MCF 10A (cell line): ENCODE measurements at regions of chr11 and their contacts with region 1.

Region 1: DNA sequence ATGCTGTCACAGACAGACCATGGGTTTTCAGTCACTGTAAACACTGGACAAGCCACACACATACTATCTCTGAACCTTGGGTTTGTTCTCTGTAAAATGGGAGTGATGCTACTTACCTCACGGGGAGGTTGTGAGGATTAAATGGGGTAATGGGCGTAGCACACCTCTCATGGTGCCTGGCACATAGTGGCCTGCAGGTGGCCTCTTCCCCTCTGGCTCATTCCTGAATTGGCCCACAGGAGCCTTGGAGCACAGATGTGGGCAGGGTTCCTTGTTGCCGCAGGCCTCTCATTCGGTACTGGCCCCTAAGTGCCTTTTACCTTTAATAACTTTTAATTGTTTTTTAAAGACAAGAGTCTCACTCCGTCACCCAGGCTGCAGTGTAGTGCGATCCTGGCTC is 11.7 kb downstream of the MICAL2 start:
- DNase-seq: peak; percentile 52
- H3K4me3 Mint-ChIP-seq: no peak overlapping the region
- H3K27ac Mint-ChIP-seq: no peak overlapping the region
- H3K4me1 Mint-ChIP-seq: peaks cover 54% of the 10 kb centered on the region
- H3K27me3 Mint-ChIP-seq: no peaks in the 10 kb centered on the region
- CTCF ChIP-seq: peak; percentile 34

Region 2: DNA sequence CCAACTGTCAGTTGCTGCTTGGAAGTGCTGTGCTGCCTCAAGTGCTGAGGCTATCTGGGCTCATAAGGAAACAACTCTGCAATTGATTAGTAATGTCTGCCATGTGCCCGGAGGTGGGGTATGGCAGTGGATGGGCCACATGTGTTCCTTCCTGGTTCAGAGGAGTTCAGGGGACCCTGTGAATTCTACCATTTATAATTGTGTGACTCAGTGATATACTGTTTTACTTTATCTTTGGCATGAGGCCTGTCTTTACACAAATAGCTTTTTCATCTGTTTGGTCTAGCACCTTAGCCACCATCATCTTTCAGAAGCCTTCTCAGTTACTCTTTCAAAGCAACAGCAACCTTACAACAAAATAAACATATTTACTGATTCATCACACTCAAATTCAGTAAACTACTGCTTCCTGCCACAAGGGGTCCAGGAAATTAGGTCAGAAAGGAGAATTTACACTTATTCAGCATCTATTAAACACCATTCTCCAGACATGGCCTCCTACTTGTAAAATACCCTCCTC is 134.5 kb before region 1 on chr11:
- CTCF ChIA-PET with region 1: no interaction called
- POLR2A ChIA-PET with region 1: no interaction called
- intact Hi-C with region 1: no loop called
- DNase-seq: peak; percentile 30
- H3K4me3 Mint-ChIP-seq: no peak overlapping the region
- H3K27ac Mint-ChIP-seq: peak overlapping the region; percentile 73
- H3K4me1 Mint-ChIP-seq: peaks cover 31% of the 10 kb centered on the region
- H3K27me3 Mint-ChIP-seq: no peaks in the 10 kb centered on the region
- CTCF ChIP-seq: peak; percentile 41

Region 3: GRCh38 chr11:12087075-12088004 is 34.7 kb before region 1 on chr11:
- CTCF ChIA-PET with region 1: interaction called, 22 read pairs
- POLR2A ChIA-PET with region 1: interaction called, 31 read pairs
- intact Hi-C with region 1: no loop called
- DNase-seq: peak; percentile 70
- H3K4me3 Mint-ChIP-seq: peak overlapping the region; percentile 8
- H3K27ac Mint-ChIP-seq: peak overlapping the region; percentile 37
- H3K4me1 Mint-ChIP-seq: peaks cover 45% of the 10 kb centered on the region
- H3K27me3 Mint-ChIP-seq: no peaks in the 10 kb centered on the region
- CTCF ChIP-seq: peak; percentile 11

Region 4: DNA sequence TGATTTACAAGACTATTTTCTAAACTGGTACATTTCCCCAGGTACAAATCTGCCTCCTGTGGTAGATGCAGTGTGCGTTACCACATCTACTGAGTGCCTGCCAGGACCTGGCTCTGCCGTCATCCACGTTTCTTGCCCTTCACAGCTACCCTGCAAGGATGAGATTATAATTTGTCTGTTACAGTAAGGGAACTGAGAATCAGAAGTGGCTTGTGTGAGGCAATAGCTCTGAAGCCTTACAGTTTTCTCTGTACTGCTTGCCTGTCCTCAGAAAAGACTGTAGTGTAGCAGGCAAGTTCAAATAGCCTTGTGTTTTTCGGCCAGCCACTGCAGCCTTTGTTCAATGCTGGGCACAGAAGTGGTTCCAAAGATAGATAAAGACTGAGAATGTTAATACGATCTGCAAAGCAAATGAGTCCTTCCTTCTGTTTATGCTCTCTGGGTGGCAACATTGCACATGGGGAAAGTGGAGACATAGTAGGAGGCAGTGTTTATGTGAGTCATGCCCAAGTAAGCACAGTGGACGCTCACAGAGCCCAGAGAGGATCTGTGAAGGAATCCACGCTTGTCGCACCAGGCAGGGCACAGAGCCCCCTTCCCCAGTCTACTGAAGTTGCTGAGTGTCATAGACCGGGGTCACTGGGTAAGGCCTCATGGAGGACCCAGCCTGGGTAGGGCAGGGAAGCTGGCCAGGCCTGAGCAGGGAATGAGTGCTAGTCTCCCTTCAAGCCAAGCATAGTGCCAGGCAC is 37.4 kb after region 1 on chr11:
- CTCF ChIA-PET with region 1: no interaction called
- POLR2A ChIA-PET with region 1: interaction called, 11 read pairs
- intact Hi-C with region 1: no loop called
- DNase-seq: peak; percentile 81
- H3K4me3 Mint-ChIP-seq: no peak overlapping the region
- H3K27ac Mint-ChIP-seq: peak overlapping the region; percentile 85
- H3K4me1 Mint-ChIP-seq: peaks cover 30% of the 10 kb centered on the region
- H3K27me3 Mint-ChIP-seq: no peaks in the 10 kb centered on the region
- CTCF ChIP-seq: no peak

Region 5: DNA sequence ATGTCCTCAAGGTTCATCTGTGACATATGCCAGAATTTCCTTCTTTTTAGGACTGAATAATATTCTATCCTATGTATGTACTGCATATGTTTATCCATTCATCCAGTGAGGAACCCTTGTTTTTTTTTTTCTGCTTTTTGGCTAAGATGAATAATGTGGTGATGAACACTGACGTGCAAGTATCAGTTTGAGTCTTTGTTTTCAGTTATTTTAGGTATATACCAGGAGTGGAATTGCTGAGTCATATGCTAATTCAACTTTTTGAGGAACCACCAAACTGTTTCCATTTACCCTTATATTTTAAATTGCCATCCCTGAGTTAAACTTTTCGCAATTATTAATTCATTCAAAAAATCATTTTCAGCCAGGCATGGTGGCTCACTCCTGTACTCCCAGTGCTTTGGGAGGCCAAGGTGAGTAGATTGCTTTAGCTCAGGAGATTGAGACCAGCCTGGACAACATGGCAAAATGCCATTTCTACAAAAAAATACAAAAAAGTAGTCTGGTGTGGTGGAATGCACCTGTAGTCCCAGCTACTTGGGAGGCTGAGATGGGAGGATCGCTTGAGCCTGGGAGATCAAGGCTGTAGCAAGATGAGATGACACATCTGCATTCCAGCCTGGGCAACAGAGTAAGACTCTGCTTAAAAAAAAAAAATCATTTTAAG is 52.5 kb after region 1 on chr11:
- CTCF ChIA-PET with region 1: interaction called, 4 read pairs
- POLR2A ChIA-PET with region 1: interaction called, 17 read pairs
- intact Hi-C with region 1: loop called (anchors 5 kb)
- DNase-seq: peak; percentile 53
- H3K4me3 Mint-ChIP-seq: no peak overlapping the region
- H3K27ac Mint-ChIP-seq: peak overlapping the region; percentile 76
- H3K4me1 Mint-ChIP-seq: peaks cover 41% of the 10 kb centered on the region
- H3K27me3 Mint-ChIP-seq: no peaks in the 10 kb centered on the region
- CTCF ChIP-seq: no peak

Region 6: DNA sequence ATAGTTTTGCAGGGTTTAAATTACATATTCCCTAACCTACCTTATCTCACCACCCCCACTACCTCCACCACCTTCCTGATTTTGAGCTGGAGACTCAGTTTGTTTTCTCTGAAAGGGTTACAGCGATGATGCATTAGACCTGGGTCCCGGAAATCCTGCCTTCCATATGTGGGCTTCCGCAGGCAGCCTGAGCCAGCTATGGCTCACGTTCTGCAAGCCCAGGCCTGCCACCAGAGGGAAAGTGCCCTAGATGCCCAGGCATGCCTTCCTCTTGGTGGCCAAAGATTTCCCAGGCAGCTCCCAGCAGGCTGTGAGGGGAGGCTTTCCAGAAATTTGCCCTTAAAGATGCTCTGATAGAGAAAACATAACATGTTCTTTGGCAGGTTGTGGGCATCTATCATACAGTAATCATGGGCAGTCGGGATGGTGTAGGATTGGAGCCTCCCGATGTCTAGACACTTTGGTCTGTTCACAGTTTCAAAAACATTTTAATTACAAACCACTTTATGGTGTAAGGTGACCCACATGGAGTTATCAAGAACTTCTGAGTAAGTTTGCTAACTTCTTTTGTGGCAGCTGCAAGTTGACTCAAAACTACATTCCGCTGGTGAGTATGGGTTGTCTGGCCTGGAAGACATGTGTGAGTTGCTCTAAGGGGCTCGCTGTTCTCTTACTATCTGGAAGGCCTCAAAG is 67.6 kb after region 1 on chr11:
- CTCF ChIA-PET with region 1: interaction called, 3 read pairs
- POLR2A ChIA-PET with region 1: interaction called, 23 read pairs
- intact Hi-C with region 1: no loop called
- DNase-seq: peak; percentile 93
- H3K4me3 Mint-ChIP-seq: peak overlapping the region; percentile 28
- H3K27ac Mint-ChIP-seq: peak overlapping the region; percentile 85
- H3K4me1 Mint-ChIP-seq: peaks cover 38% of the 10 kb centered on the region
- H3K27me3 Mint-ChIP-seq: no peaks in the 10 kb centered on the region
- CTCF ChIP-seq: peak; percentile 30